ENCODE measurements at regions of chr12 and their contacts with region 1.

Region 1: DNA sequence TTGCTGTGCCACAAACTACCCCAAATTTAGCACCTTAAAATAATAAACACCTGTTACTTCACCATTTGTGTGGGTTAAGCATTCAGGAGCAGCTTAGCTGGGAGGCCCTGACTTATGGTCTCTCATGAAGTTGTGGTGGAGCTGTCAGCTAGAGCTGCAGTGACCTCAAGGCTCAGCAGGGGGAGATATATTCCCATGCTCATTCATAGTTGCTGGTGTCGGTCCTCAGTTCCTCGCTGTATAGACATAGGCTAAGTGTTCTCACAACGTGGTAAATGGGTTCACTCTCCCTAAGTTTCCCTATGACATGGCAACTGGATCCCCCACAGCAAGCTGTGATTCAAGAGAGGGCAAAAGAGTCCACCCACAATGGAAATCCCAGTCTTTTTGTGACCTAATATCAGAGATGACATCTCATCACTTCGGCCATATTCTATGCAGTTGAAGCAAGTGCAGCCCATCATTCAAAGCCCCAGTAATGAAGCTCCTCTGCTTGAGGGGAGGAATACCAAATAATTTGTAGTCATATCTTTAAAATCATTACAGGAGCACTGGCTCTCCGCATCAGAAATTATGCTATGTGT is 41.1 kb downstream of the PRB3 start:
- DNase-seq: peak in 1 of 2 donors; percentile 35
- ATAC-seq: peak; percentile 77

Region 2: DNA sequence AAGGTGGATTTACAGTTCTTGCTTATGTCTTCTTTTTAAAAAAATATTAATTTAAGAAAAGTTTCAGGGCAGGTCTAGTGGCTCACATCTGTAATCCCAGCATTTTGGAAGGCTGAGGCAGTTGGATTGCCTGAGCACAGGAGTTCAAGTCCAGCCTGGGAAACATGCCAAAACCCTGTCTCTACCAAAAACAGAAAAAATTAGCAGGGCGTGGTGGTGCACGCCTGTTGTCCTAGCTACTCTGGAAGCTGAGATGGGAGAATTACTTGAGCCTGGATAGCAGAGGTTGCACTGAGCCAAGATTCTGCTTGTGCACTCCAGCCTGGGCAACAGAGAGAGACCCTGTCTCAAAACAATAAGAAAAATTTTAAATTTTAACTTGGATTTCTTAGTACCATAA is 160.9 kb before region 1 on chr12:
- intact Hi-C with region 1: no loop called
- DNase-seq: peak in 1 of 2 donors; percentile 7
- ATAC-seq: peak; percentile 48

Region 3: DNA sequence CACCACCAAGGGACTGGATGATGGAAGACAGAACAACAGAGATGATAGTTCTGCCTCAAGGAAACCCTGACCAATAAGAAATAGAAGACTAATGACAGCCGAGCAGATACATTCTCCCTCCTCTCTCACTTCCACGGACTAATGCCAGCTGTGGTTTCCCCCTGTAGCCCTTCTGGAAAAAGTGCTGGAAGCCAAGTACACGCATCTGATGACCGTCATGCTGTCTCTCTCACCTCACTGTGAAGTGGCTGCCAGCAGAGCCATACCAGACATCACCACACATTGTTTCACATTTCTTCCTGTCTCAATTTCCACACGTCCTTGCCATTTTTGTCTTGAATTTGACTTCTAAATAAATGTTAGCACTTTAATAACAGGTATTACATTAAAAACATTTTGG is 139.1 kb before region 1 on chr12:
- intact Hi-C with region 1: no loop called
- DNase-seq: no peak
- ATAC-seq: no peak

Region 4: GRCh38 chr12:11486623-11487444 is 258.4 kb after region 1 on chr12:
- intact Hi-C with region 1: loop called in 1 of 2 experiments (anchors 10 kb)
- DNase-seq: peak; percentile 58 to 80
- ATAC-seq: peak; percentile 85

Region 5: DNA sequence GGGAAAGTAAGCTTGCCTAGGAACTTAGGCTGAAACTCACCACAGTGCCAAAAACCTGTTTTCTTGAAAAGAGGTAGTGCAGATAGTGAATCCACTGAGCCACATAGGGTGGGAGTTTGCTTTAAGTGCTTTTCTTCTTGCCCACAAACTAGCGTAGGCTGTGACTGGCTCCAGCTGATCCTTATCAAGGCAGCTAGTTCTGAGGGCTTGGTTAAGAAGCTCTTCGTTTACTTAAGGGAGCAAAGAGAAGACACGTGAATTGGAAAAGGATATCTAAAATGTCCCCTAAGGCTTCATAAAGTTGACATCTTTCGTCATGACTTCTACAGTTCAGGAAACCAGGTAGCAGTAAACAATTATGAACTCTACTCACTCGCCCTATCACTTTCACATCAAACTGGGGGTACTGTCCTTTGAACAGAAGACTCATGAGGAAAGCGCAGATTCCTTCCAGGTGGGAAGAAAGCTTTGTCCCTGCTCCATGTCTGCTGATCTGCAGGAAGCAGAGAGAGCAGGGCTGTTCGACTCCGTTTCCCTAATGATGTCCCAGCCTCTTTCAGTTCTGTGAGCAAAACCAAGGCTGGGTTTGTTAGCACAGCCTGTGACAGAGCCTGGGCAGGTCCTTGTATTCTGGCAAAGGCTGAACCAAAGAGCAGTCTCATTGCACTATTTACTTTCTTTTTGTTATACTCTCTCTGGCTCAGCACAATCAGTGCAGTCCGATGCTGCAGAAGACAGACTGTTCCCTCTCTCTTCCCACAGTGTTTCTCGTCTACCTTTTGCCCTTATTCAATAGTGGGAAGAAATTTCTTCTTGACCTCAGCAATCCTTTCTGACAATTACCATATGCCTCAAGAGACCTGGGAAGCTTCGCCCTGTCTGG is 327.6 kb after region 1 on chr12:
- intact Hi-C with region 1: no loop called
- DNase-seq: peak; percentile 37 to 59
- ATAC-seq: peak; percentile 81